ENCODE measurements at regions of chr22 and their contacts with region 1.

Region 1: DNA sequence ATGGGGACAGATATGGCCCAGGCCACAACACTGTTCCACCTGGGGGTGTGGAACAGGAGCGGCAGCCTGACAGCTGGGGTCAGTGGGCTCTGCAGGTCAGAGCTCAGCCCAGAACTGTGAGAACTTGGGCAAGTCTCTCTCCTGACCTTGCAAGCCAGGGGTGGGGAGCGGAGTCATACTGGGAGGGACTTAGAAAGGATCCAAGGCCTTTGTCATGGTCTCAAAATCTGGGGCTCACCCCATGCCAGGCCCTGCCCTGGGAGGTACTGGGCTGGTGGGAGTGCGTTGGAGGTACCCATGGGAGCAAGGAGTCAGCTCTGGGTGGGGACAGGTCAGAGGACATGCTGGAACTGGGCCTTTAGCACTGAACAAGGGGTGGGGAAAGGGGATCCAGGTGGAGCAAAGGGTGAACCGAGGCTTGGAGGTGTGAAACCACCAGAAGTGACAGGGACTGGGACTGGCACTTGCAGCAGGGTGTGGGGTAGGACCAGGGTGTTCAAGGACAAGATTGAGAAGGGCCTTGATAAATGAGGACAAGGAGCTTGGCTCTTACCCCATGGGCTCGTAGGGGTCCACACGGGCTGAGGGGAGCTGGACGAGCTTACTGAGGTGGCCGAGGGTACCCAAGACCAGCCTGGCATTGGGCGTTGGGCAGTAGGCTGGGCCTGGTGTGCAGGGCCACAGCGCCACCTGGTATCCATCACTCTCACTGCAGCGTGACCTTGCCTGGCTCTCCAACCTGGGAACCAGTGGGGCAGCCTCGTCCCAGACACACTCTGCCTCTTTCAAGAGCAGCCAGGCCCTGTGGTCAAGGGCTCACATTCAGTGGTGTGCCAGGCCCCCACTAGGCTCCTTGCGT is 7.4 kb upstream of the PMM1 start:
- DNase-seq: peak; percentile 57
- H3K4me3 ChIP-seq: no peak overlapping the region
- H3K27ac ChIP-seq: no peak overlapping the region
- H3K4me1 ChIP-seq: no peaks in the 10 kb centered on the region
- H3K27me3 ChIP-seq: no peaks in the 10 kb centered on the region
- CTCF ChIP-seq: peak; percentile 65

Region 2: DNA sequence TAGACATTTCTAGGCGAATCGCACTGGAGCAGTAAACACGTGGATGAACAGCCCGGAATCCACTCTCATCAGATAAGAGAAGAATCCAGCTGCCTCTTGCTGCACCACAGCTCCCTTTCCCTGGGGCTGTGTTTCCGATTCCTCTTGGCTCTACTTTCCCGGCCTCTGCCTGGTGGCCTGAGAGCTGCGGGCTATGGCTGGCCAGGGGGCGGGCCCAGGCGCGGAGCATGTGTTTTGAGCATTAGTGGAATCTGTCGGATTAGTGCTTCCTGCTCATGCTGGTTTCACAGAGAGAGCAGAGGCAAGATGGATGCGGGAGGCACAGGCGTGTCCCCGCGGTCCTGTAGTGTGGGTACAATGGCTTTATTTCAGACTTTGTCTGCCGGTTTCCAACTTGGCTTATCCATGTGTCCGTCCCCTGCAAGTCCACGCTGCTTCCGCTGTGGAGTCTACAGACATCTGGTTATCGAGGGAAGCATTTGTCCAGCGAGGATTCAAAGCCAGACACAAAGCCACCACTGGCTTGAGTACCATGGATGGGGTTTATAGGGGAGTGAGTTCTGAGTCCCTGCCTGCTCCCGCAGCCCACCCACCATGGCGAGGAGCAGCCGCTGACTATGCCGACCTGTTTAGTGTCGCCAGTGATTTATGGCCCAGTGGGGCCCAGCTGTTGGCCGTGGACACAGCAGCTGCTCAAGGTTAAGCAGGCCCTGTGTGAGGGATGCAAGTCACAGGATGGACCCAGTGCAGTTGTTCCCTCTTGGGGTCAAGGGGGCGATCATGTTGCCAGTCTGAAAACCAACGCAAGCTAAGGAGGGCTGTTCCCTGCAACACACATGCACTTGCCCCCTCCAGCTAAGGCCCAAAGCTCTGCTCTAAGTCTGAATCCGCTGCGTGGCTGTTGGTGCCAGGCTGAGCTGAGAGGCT is 548.0 kb before region 1 on chr22:
- intact Hi-C with region 1: no loop called
- DNase-seq: peak; percentile 52
- H3K4me3 ChIP-seq: no peak overlapping the region
- H3K27ac ChIP-seq: peak overlapping the region; percentile 20
- H3K4me1 ChIP-seq: no peaks in the 10 kb centered on the region
- H3K27me3 ChIP-seq: no peaks in the 10 kb centered on the region
- CTCF ChIP-seq: no peak

Region 3: DNA sequence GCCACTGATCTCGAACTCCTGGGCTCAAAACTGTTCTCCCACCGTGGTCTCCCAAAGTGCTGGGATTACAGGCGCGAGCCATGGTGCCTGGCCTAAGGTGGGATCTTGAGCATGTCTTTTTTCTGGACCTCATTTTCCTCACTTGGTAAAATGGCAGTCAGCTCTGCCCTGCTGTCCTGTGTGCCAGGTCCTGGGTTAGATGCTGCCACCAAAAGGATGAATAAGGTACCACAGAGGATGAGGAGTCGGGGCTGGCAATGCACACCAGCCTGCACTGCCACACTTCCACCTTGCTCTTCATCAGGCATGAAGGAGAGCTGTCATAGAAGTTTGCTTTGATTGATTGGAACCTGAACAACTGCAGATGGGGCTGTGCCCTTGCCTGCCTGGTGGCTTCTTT is 95.8 kb before region 1 on chr22:
- intact Hi-C with region 1: no loop called
- DNase-seq: no peak
- H3K4me3 ChIP-seq: no peak overlapping the region
- H3K27ac ChIP-seq: no peak overlapping the region
- H3K4me1 ChIP-seq: no peaks in the 10 kb centered on the region
- H3K27me3 ChIP-seq: no peaks in the 10 kb centered on the region
- CTCF ChIP-seq: no peak

Region 4: DNA sequence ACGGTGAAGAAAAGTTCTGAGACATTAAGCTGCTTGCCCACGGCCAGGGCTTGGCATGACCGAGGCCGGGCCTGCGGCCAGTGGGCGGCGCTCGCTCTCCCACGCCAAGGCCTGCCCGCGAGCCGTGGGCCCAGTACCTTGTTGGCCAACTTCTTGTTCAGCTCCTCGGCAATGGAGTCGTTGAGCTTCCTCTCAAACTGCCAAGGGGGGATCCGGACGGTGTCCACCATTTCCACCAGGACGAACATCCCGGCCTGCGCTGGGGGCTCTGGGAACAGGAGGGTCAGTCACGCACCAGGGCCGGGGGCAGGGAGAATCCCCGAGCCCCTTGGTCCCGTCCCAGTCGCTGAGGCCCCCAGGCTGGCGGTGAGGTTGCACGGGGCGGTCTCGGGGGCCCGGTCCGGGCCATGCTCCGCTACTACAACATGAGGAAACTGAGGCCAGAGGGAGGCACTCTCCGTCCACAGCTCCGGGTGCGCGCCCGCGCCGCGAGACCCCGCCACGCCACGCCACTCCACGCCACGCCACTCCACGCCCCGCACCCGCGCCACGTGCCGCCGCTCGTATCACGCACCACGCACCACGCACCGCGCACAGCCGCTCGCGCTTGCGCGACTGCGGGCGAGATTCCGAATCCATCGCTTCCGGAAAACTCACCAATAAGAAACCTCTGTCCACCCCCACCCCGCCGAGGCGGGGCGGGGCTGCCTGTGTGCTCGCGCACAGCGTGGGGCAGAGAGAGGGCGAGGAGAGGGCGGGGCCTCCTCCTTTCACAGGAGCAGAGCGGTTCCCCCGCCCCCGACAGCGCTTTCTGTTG is 52.9 kb before region 1 on chr22 and contains the start of gene POLR3H:
- intact Hi-C with region 1: loop called (anchors 5 kb)
- DNase-seq: peak; percentile 99
- H3K4me3 ChIP-seq: peak within 1 kb of the TSS; percentile 58
- H3K27ac ChIP-seq: peak within 1 kb of the TSS; percentile 56
- H3K4me1 ChIP-seq: no peaks in the 10 kb centered on the region
- H3K27me3 ChIP-seq: no peaks in the 10 kb centered on the region
- CTCF ChIP-seq: peak; percentile 62
- total RNA-seq, gene POLR3H: 9.2 to 20.0 TPM